Vagina (tissue), 2 donors: ENCODE measurements at regions of chr17 and their contacts with region 1.

Region 1: DNA sequence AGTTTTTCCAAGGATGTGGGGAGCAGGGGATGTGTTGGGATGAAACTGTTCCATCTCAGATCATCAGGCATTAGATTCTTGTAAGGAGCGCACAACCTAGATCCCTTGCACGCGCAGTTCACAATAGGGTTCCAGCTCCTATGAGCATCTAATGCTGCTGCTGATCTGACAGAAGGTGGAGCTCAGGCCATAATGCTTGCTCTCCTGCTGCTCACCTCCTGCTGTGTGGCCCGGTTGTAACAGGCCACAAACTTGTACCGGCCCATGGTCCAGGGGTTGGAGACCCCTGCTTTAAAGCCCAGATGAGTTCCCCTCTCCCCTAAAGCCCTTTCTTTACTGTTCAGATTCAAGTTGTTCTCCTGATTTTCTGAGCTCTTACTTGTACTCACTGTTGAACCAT is 44.8 kb downstream of the RNF135 start:
- DNase-seq: no peak
- H3K4me3 ChIP-seq: no peak overlapping the region
- H3K27ac ChIP-seq: no peak overlapping the region
- H3K4me1 ChIP-seq: no peaks in the 10 kb centered on the region
- H3K27me3 ChIP-seq: no peaks in the 10 kb centered on the region
- CTCF ChIP-seq: no peak
- POLR2A ChIP-seq: no peak

Region 2: DNA sequence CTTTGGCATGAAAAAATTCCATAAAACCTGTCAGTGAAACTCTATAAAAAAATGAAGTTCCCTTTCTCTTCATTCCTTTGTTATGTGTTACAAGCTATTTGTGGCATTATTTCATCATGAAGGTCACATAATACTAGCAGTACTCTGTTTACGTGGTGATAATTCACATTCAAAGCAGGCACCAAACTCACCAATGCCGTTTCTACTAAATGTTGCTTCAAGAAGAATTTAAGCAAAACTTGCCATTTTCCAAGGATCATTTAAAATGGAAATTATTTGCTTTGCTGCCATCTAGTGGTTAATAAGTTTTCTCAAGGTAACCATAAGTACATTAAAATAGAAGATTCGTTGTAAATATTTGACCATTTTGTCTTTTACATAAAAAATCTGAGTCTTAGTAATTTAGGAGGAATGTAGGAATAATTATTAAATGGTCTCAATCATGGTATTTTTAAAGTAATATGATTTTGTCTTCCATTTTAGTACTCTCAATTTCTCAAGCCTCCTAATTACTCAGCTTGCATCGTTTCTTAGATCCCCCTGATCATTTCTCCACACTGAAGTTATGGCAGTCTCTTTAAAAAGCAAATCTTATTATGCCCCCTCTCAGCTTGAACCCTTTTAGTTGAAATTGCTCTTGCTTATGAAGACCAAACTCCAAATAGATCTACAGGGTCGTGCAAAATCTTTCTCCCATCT is 200.6 kb after region 1 on chr17:
- intact Hi-C with region 1: loop called (anchors 10 kb)
- DNase-seq: no peak
- H3K4me3 ChIP-seq: no peak overlapping the region
- H3K27ac ChIP-seq: no peak overlapping the region
- H3K4me1 ChIP-seq: peaks cover 4% of the 10 kb centered on the region
- H3K27me3 ChIP-seq: no peaks in the 10 kb centered on the region
- CTCF ChIP-seq: peak; percentile 42 to 77 (median 53)
- POLR2A ChIP-seq: no peak